ENCODE measurements at regions of chr22 and their contacts with region 1.

Region 1: GRCh38 chr22:30968924-30969539 is at the start of gene TUG1:
- DNase-seq: peak; percentile 91 to 99 (median 98)
- ATAC-seq: peak; percentile 92 to 94
- H3K4me3 Mint-ChIP-seq: peak within 1 kb of the TSS; percentile 89 to 97 (median 93)
- H3K27ac Mint-ChIP-seq: peak within 1 kb of the TSS; percentile 93 to 98 (median 97)
- H3K4me1 Mint-ChIP-seq: peaks cover 13 to 63% (median 42%) of the 10 kb centered on the region in 4 donors
- H3K27me3 Mint-ChIP-seq: no peaks in the 10 kb centered on the region
- polyA plus RNA-seq, gene TUG1: 19.0 to 27.2 (median 19.4) TPM

Region 2: DNA sequence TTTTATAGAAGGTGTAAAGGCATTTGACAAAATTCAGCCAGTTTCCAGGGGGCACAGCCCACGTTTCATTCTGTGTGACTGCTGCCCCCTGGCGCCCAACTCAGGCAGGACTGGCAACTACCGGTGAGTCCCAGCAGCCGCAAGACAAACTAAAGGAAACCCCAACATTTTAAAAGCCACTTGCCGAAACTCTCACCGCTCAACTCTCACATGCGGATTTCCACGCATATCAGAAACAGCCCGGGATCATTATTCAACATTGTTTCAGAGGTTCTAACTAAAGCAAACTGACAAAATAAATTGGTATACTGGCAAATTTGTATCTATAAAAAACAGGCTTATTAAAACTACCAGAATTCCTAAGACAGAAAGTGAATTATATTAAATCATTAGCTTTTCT is 48.6 kb before region 1 on chr22:
- POLR2A ChIA-PET with region 1: interaction called, 49 read pairs
- DNase-seq: peak; percentile 69 to 92 (median 82)
- ATAC-seq: peak; percentile 74 to 80
- H3K4me3 Mint-ChIP-seq: peak overlapping the region; percentile 62 to 86 (median 83)
- H3K27ac Mint-ChIP-seq: peak overlapping the region in 9 of 10 donors; percentile 0 to 80 (median 36)
- H3K4me1 Mint-ChIP-seq: peaks cover 7 to 25% (median 15%) of the 10 kb centered on the region in 4 donors
- H3K27me3 Mint-ChIP-seq: peaks cover 0 to 2% (median 0%) of the 10 kb centered on the region in 5 donors

Region 3: GRCh38 chr22:30940685-30941362 is 28.2 kb before region 1 on chr22:
- POLR2A ChIA-PET with region 1: interaction called, 86 read pairs
- DNase-seq: peak; percentile 16 to 77 (median 46)
- ATAC-seq: peak; percentile 73 to 79
- H3K4me3 Mint-ChIP-seq: peak overlapping the region; percentile 81 to 92 (median 86)
- H3K27ac Mint-ChIP-seq: peak overlapping the region; percentile 93 to 98 (median 96)
- H3K4me1 Mint-ChIP-seq: peaks cover 38 to 92% (median 87%) of the 10 kb centered on the region in 4 donors
- H3K27me3 Mint-ChIP-seq: no peaks in the 10 kb centered on the region

Region 4: GRCh38 chr22:30947816-30948454 is 21.1 kb before region 1 on chr22:
- POLR2A ChIA-PET with region 1: interaction called, 86 read pairs
- DNase-seq: peak in 3 of 10 donors; percentile 49 to 64 (median 61)
- ATAC-seq: peak; percentile 41 to 47
- H3K4me3 Mint-ChIP-seq: no peak overlapping the region
- H3K27ac Mint-ChIP-seq: no peak overlapping the region
- H3K4me1 Mint-ChIP-seq: peaks cover 48 to 66% (median 60%) of the 10 kb centered on the region in 4 donors
- H3K27me3 Mint-ChIP-seq: no peaks in the 10 kb centered on the region

Region 5: DNA sequence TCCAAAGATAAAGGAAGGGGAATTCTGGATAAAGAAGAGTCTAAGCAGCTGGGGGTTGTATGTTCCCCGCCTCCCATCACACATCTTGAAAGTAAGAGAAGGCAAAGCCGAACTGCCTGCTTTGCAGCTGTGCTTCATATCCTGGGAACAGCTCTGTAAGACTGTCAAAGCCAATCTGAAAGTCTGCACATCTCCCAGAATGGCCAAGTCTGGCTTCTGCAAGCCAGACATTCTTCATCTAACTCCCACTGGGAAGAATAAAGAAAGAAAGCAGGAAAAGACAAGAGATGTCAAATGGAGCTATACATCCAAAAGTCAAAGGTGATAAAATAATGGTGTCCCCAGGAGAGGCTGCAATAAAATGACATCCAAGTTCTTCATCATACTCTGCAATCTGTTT is 15.8 kb before region 1 on chr22:
- POLR2A ChIA-PET with region 1: interaction called, 53 read pairs
- DNase-seq: no peak
- ATAC-seq: no peak
- H3K4me3 Mint-ChIP-seq: peak overlapping the region in 1 of 10 donors; percentile 11
- H3K27ac Mint-ChIP-seq: peak overlapping the region in 7 of 10 donors; percentile 3 to 78 (median 61)
- H3K4me1 Mint-ChIP-seq: peaks cover 44 to 75% (median 67%) of the 10 kb centered on the region in 4 donors
- H3K27me3 Mint-ChIP-seq: no peaks in the 10 kb centered on the region

Region 6: GRCh38 chr22:30979932-30980331 is 10.9 kb after region 1 on chr22:
- POLR2A ChIA-PET with region 1: interaction called, 45 read pairs
- DNase-seq: no peak
- ATAC-seq: no peak
- H3K4me3 Mint-ChIP-seq: no peak overlapping the region
- H3K27ac Mint-ChIP-seq: no peak overlapping the region
- H3K4me1 Mint-ChIP-seq: peaks cover 0 to 10% (median 2%) of the 10 kb centered on the region in 4 donors
- H3K27me3 Mint-ChIP-seq: no peaks in the 10 kb centered on the region

Region 7: GRCh38 chr22:31080848-31081649 is 112.0 kb after region 1 on chr22 and contains the start of gene SMTN:
- POLR2A ChIA-PET with region 1: interaction called, 74 read pairs
- DNase-seq: peak; percentile 79 to 91 (median 88)
- ATAC-seq: peak; percentile 70 to 72
- H3K4me3 Mint-ChIP-seq: peak within 1 kb of the TSS; percentile 85 to 95 (median 90)
- H3K27ac Mint-ChIP-seq: peak within 1 kb of the TSS; percentile 21 to 92 (median 82)
- H3K4me1 Mint-ChIP-seq: peaks cover 19 to 46% (median 38%) of the 10 kb centered on the region in 4 donors
- H3K27me3 Mint-ChIP-seq: no peaks in the 10 kb centered on the region
- polyA plus RNA-seq, gene SMTN: 1.1 to 1.8 TPM in 2 of 3 donors, not detected in the other

Measured in naive thymus-derived CD8-positive, alpha-beta T cell (primary cell).